Activated CD4-positive, alpha-beta T cell treated with anti-CD3 and anti-CD28 coated beads, Interleukin-2, amount 10 ng/mL, durations not matched to agents 7 days and 5 days (primary cell): ENCODE measurements at regions of chr12 and their contacts with region 1.

Region 1: GRCh38 chr12:452667-453210 is 7.0 kb upstream of the B4GALNT3 start:
- DNase-seq: peak; percentile 26
- H3K4me3 Mint-ChIP-seq: no peak overlapping the region
- H3K27ac Mint-ChIP-seq: no peak overlapping the region
- H3K4me1 Mint-ChIP-seq: peaks cover 3% of the 10 kb centered on the region
- H3K27me3 Mint-ChIP-seq: peaks cover 40% of the 10 kb centered on the region

Region 2: GRCh38 chr12:401235-402028 is 51.3 kb before region 1 on chr12 and contains the start of gene CCDC77:
- CTCF ChIA-PET with region 1: interaction called, 24 read pairs
- POLR2A ChIA-PET with region 1: no interaction called
- DNase-seq: peak; percentile 94
- H3K4me3 Mint-ChIP-seq: no peak within 1 kb of the TSS
- H3K27ac Mint-ChIP-seq: no peak within 1 kb of the TSS
- H3K4me1 Mint-ChIP-seq: peaks cover 7% of the 10 kb centered on the region
- H3K27me3 Mint-ChIP-seq: no peaks in the 10 kb centered on the region
- total RNA-seq, gene CCDC77: 14.6 TPM

Region 3: DNA sequence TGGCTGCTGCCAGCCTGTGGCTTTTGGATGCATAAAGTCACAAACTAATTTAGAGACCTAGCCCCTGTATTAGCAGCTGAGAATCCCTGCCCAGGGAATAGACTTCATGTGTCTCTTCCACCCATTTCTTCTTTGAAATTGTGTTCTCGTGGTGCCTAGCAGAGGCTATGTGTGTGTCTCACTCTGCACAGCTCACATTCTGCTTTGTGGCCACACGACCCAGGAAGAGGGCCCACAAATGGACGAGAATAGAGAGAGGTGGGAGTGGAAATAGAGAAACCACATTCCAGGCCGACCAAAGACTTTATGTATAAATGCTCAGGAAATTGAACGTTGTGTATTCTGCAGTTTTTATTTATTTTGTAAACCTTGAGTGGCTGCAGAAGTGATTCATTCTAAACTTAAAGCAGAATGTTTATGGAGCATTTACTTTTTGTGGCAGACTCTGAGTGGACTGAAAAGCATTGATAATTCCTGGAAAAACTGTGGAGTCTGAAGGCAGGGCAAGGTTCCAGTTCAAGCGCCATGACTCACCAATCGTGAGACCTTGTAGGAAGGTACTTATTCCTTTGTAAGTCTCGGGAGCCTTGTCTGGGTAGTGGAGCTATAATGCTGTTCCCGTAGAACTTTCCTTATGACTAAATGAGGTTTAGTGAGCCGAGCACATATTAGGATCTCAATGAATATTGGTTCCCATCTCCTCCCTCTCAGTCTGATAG is 16.1 kb after region 1 on chr12:
- CTCF ChIA-PET with region 1: interaction called, 44 read pairs
- POLR2A ChIA-PET with region 1: no interaction called
- DNase-seq: no peak
- H3K4me3 Mint-ChIP-seq: no peak overlapping the region
- H3K27ac Mint-ChIP-seq: no peak overlapping the region
- H3K4me1 Mint-ChIP-seq: no peaks in the 10 kb centered on the region
- H3K27me3 Mint-ChIP-seq: peaks cover 15% of the 10 kb centered on the region

Region 4: DNA sequence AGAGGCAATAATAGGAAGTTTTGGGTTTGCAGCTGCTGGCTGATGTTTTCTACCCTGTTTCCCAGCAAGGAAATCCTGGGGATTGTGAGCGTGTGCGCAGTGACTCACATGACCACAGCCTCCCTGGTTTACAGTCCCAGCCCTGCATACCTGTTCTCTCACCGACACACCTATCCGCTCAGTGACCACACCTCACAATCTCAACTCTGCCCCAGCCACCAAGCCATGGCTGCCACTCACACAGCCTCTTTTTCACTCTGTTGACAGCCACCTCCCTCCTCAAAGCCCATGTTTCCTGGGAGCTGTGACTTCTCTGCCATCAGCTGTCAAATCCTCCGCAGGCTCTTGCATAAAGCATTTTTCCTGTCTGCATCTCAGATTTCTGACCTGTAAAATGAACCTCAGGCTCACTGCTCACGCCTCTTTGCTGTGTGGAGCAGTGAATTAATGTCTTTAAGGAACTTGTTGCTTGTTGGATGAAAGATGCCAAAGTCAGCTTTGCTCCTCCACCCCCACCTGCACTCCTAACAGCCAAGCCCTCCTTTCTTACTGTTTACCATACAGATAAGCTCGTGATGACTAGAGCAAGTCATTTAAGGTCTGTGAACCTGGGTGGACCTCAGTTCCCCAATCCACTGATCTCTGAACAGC is 50.5 kb after region 1 on chr12:
- CTCF ChIA-PET with region 1: interaction called, 12 read pairs
- POLR2A ChIA-PET with region 1: no interaction called
- DNase-seq: no peak
- H3K4me3 Mint-ChIP-seq: no peak overlapping the region
- H3K27ac Mint-ChIP-seq: no peak overlapping the region
- H3K4me1 Mint-ChIP-seq: peaks cover 12% of the 10 kb centered on the region
- H3K27me3 Mint-ChIP-seq: peaks cover 12% of the 10 kb centered on the region

Region 5: GRCh38 chr12:546921-547845 is 94.4 kb after region 1 on chr12:
- CTCF ChIA-PET with region 1: interaction called, 137 read pairs
- POLR2A ChIA-PET with region 1: no interaction called
- DNase-seq: peak; percentile 64
- H3K4me3 Mint-ChIP-seq: no peak overlapping the region
- H3K27ac Mint-ChIP-seq: peak overlapping the region; percentile 54
- H3K4me1 Mint-ChIP-seq: peaks cover 37% of the 10 kb centered on the region
- H3K27me3 Mint-ChIP-seq: peaks cover 13% of the 10 kb centered on the region

Region 6: DNA sequence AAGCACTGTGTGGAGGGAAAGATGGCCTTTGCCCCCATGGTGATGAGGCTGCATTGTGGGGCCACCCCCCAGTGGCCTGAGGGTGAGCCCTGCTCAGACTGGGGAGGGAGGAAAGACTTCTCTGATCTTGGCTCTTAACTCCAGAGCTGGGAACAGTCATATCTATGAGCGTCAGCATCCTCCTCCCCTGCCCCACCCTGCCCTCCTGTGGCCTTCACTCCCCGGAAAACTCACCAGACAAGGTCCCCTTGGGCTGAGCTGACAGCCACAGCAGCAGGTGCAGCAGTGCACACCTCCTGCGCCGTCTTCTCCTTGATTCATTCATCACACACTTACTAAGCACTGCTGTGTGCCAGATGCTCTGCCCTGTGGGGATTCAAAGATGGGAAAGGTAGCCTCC is 105.8 kb after region 1 on chr12:
- CTCF ChIA-PET with region 1: interaction called, 14 read pairs
- POLR2A ChIA-PET with region 1: no interaction called
- DNase-seq: no peak
- H3K4me3 Mint-ChIP-seq: no peak overlapping the region
- H3K27ac Mint-ChIP-seq: no peak overlapping the region
- H3K4me1 Mint-ChIP-seq: peaks cover 63% of the 10 kb centered on the region
- H3K27me3 Mint-ChIP-seq: no peaks in the 10 kb centered on the region